Esophagus squamous epithelium (tissue), 5 donors: ENCODE measurements at regions of chr19 and their contacts with region 1.

Region 1: DNA sequence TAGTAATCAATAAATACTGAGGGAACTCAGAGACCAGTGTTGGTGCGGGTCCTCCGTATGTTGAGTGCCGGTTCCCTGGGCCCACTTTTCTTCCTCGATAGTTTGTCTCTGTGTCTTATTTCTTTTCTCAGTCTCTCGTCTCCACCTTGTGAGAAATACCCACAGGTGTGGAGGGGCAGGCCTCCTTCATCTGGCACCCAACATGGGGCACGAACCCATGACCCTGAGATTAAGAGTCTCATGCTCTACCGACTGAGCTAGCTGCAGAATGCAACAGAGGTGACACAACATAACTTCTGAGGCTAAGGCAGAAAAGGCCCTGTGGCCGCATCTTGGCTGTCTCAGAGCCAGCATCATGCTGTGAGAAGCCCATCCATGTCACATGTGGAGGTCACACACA is 5.3 kb upstream of the ZNF613 start:
- DNase-seq: no peak
- H3K4me3 ChIP-seq: no peak overlapping the region
- H3K27ac ChIP-seq: no peak overlapping the region
- H3K4me1 ChIP-seq: peaks cover 0 to 4% (median 0%) of the 10 kb centered on the region in 3 donors
- H3K27me3 ChIP-seq: no peaks in the 10 kb centered on the region
- CTCF ChIP-seq: no peak
- POLR2A ChIP-seq: no peak

Region 2: GRCh38 chr19:51799034-51799773 is 122.7 kb before region 1 on chr19:
- intact Hi-C with region 1: no loop called
- DNase-seq: no peak
- H3K4me3 ChIP-seq: peak overlapping the region in 2 of 4 donors; percentile 1 to 4
- H3K27ac ChIP-seq: peak overlapping the region in 3 of 4 donors; percentile 55 to 80 (median 69)
- H3K4me1 ChIP-seq: peaks cover 3 to 15% (median 4%) of the 10 kb centered on the region in 3 donors
- H3K27me3 ChIP-seq: no peaks in the 10 kb centered on the region
- CTCF ChIP-seq: no peak
- POLR2A ChIP-seq: peak in 1 of 4 donors; percentile 28

Region 3: DNA sequence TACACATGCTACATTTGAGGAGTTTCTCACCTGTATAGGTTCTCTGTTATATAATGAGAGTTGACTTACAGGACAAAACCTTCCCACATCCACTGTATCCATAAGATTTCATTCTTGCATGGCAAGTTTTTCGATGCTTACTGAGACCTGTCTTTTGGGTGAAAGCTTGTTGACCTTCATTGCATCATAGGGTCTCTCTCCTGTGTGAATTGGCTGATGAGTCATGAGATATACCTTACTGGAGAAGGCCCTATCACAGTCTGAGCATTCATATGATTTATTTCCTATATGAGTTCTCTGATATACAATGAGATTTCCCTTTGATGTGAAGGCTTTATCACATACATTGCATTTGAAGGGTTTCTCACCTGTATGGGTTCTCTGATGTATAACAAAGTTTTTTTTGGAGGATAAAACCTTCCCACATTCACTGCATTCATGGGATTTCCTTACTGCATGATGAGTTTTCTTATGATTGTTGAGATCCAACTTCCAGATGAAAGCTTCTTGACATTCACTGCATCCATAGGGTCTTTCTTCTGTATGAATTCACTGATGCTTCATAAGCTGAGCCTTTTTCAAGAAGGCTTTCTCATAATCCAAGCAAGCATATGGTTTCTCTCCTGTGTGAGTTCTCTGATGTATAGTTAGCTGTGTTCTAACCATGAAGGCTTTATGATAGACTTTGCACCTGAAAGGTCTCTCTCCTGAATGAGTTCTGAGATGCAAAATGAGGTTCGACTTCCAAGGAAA is 59.9 kb before region 1 on chr19:
- intact Hi-C with region 1: no loop called
- DNase-seq: no peak
- H3K4me3 ChIP-seq: no peak overlapping the region
- H3K27ac ChIP-seq: no peak overlapping the region
- H3K4me1 ChIP-seq: no peaks in the 10 kb centered on the region
- H3K27me3 ChIP-seq: no peaks in the 10 kb centered on the region
- CTCF ChIP-seq: no peak
- POLR2A ChIP-seq: no peak

Region 4: GRCh38 chr19:51938936-51939335 is 17.0 kb after region 1 on chr19:
- intact Hi-C with region 1: loop called (anchors 2 kb)
- DNase-seq: no peak
- H3K4me3 ChIP-seq: no peak overlapping the region
- H3K27ac ChIP-seq: no peak overlapping the region
- H3K4me1 ChIP-seq: no peaks in the 10 kb centered on the region
- H3K27me3 ChIP-seq: no peaks in the 10 kb centered on the region
- CTCF ChIP-seq: no peak
- POLR2A ChIP-seq: no peak

Region 5: GRCh38 chr19:52022193-52022592 is 100.2 kb after region 1 on chr19:
- intact Hi-C with region 1: no loop called
- DNase-seq: no peak
- H3K4me3 ChIP-seq: no peak overlapping the region
- H3K27ac ChIP-seq: no peak overlapping the region
- H3K4me1 ChIP-seq: peaks cover 0 to 14% (median 3%) of the 10 kb centered on the region in 3 donors
- H3K27me3 ChIP-seq: no peaks in the 10 kb centered on the region
- CTCF ChIP-seq: no peak
- POLR2A ChIP-seq: no peak